GM10248 (cell line): ENCODE measurements at regions of chr1 and their contacts with region 1.

Region 1: DNA sequence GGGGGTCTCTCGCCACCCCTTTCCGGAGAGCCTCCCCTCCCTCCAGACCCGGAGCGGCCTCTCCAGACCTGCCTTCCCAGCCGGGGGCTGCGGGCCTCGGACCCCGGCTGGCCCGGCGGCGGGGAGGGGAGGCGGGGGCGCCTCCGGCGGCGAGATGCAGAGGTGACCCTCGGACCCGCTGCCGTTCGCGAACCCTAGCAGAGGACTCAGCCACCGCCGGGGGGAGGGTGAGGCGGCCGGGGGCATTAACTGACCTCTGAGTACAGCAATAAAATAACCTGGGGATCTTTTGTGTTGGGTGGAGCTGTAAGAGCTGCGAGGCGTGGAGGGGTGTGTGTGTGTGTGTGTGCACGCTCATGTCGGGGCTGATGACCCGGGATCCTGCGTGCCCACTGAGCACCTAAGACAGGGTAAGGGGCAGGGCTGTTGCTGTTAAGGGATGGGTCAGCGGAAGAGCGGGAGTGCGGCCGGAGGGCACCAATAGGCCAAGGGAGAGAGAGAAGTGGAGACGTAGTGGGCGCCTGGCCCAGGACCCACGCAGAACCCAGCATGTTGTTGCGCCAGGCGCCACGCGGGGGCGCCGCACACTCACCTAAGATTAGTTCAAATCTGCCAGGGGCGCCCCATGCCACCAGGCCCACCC is 6.3 kb downstream of the HAPLN2 start:
- DNase-seq: peak; percentile 69
- CTCF ChIP-seq: peak; percentile 83

Region 2: GRCh38 chr1:156641761-156642264 is 16.3 kb after region 1 on chr1 and contains the start of gene BCAN:
- CTCF ChIA-PET with region 1: interaction called, 38 read pairs
- POLR2A ChIA-PET with region 1: no interaction called
- DNase-seq: peak; percentile 66
- CTCF ChIP-seq: peak; percentile 8

Region 3: DNA sequence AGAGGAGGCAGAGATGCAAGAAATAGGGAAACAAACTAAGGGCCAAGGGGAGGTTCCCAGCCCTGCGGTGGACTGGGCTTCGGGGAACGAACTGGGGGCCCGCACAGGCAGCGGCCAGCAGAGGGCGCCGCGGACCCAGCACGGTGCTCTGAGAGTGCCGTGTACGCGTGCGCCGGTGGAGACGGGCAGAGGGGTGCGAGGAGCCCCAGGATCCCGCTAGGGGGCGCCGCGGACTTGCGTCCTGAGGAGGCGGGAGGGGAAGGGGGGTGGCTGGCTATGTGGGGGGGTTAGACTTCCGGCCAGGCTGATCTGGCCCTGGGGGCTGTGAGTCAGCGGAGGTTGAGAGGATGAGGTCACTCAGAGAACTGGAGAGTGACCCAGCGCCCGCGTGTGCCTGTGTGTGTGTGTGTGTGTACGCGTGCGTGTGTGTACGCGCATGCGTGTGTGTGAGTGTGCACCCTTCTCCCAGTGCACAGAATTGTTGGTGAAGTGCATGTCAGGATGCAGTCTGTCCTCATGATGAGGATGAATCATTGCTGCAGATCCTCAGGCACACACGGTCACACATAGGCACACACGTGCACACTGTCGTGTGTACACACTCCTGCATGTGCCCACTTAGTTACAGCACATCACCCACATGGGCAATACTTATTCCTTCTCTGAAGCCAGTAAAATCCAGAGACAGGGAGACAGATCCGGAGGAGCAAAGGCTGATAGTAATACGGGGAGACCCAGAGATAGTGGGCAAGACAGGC is 34.6 kb after region 1 on chr1:
- CTCF ChIA-PET with region 1: interaction called, 305 read pairs
- POLR2A ChIA-PET with region 1: no interaction called
- DNase-seq: peak; percentile 99
- CTCF ChIP-seq: peak; percentile 99

Region 4: DNA sequence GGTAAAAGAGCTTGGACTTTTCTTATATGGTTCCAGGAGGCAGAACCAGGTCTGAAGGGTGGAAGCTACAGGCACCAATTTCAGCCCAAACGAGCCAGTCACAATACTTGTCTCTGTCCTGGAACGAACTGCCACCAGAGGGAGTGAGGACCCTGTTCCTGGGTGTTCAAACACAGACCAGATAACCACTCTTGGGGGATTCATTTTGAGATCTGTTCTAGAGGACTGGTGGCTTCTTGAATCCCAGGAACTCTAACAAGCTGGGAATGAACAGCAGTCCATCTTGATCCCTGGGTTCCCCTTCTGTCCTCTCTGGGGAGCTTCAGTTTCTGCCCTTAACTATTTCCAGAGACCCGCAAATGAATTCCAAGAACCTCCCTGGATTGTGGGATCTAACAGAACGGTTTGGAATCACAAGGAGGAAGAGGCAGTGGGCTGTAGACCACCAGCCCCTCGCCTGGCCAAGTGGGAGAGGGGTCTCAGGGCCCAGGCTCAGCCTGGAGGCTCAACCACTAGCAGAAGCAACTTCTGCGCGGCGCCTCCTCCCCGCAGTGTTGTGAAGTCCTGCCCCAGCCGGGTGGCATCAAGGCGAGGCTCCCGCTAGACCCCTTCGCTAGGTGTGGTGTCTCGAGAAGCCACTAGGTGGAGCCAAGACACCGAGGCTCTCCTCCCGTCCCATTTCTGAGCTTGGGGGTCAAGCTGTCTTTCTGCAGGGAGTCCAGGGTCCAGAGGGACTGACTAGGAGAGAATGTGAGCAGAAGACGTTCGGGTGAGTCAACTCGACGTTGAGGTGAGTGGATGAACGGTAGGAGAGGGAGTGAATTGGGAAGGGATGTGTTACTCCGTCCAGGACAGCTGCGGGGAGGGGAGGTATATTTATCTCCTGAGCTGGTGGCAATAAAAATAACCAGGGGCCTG is 63.7 kb after region 1 on chr1:
- CTCF ChIA-PET with region 1: interaction called, 23 read pairs
- POLR2A ChIA-PET with region 1: no interaction called
- DNase-seq: peak; percentile 87
- CTCF ChIP-seq: peak; percentile 87

Region 5: GRCh38 chr1:156733989-156734584 is 108.5 kb after region 1 on chr1:
- CTCF ChIA-PET with region 1: no interaction called
- POLR2A ChIA-PET with region 1: no interaction called
- DNase-seq: no peak
- CTCF ChIP-seq: no peak